Activated CD4-positive, alpha-beta memory T cell treated with anti-CD3 and anti-CD28 coated beads for 36 hours (primary cell): ENCODE measurements at regions of chr11 and their contacts with region 1.

Region 1: GRCh38 chr11:3091791-3092602 is 34.8 kb upstream of the CARS1 start:
- DNase-seq: peak; percentile 81
- H3K4me3 Mint-ChIP-seq: no peak overlapping the region
- H3K27ac Mint-ChIP-seq: no peak overlapping the region
- H3K4me1 Mint-ChIP-seq: no peaks in the 10 kb centered on the region
- H3K27me3 Mint-ChIP-seq: peaks cover 1% of the 10 kb centered on the region

Region 2: GRCh38 chr11:2428322-2428795 is 663.6 kb before region 1 on chr11:
- CTCF ChIA-PET with region 1: no interaction called
- POLR2A ChIA-PET with region 1: no interaction called
- intact Hi-C with region 1: loop called (anchors 5 kb)
- DNase-seq: peak; percentile 87
- H3K4me3 Mint-ChIP-seq: no peak overlapping the region
- H3K27ac Mint-ChIP-seq: no peak overlapping the region
- H3K4me1 Mint-ChIP-seq: no peaks in the 10 kb centered on the region
- H3K27me3 Mint-ChIP-seq: no peaks in the 10 kb centered on the region

Region 3: GRCh38 chr11:2885676-2886081 is 206.3 kb before region 1 on chr11 and contains the start of gene CDKN1C:
- CTCF ChIA-PET with region 1: interaction called, 24 read pairs
- POLR2A ChIA-PET with region 1: no interaction called
- intact Hi-C with region 1: no loop called
- DNase-seq: peak; percentile 82
- H3K4me3 Mint-ChIP-seq: peak within 1 kb of the TSS; percentile 80
- H3K27ac Mint-ChIP-seq: peak within 1 kb of the TSS; percentile 24
- H3K4me1 Mint-ChIP-seq: peaks cover 3% of the 10 kb centered on the region
- H3K27me3 Mint-ChIP-seq: peaks cover 2% of the 10 kb centered on the region
- total RNA-seq, gene CDKN1C: 0.41 to 0.69 TPM

Region 4: DNA sequence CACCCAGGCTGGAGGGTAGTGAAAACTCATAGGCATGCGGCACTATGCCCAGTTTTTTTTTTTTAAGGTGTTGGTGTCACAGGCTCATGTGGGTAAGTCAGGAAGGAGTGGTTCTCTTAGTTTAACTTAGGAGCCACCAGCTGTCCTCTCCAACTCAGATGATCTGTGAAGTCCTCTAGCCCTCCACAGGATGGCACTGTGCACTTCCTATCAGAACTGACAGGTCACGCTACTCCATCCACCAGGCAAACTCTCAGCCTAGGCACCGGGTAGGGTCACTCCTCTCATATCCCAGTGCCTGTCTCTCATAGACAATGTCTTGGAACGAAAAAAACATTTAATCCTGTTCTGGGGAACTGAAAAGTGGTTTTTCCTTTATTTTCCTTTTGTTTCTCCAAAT is 116.4 kb before region 1 on chr11:
- CTCF ChIA-PET with region 1: interaction called, 28 read pairs
- POLR2A ChIA-PET with region 1: no interaction called
- intact Hi-C with region 1: loop called (anchors 5 kb)
- DNase-seq: peak; percentile 53
- H3K4me3 Mint-ChIP-seq: no peak overlapping the region
- H3K27ac Mint-ChIP-seq: no peak overlapping the region
- H3K4me1 Mint-ChIP-seq: peaks cover 28% of the 10 kb centered on the region
- H3K27me3 Mint-ChIP-seq: no peaks in the 10 kb centered on the region

Region 5: GRCh38 chr11:3014057-3014938 is 77.7 kb before region 1 on chr11:
- CTCF ChIA-PET with region 1: interaction called, 27 read pairs
- POLR2A ChIA-PET with region 1: no interaction called
- intact Hi-C with region 1: no loop called
- DNase-seq: peak; percentile 82
- H3K4me3 Mint-ChIP-seq: no peak overlapping the region
- H3K27ac Mint-ChIP-seq: peak overlapping the region; percentile 77
- H3K4me1 Mint-ChIP-seq: peaks cover 55% of the 10 kb centered on the region
- H3K27me3 Mint-ChIP-seq: no peaks in the 10 kb centered on the region

Region 6: GRCh38 chr11:3028813-3029212 is 63.2 kb before region 1 on chr11:
- CTCF ChIA-PET with region 1: no interaction called
- POLR2A ChIA-PET with region 1: no interaction called
- intact Hi-C with region 1: no loop called
- DNase-seq: no peak
- H3K4me3 Mint-ChIP-seq: no peak overlapping the region
- H3K27ac Mint-ChIP-seq: no peak overlapping the region
- H3K4me1 Mint-ChIP-seq: peaks cover 13% of the 10 kb centered on the region
- H3K27me3 Mint-ChIP-seq: no peaks in the 10 kb centered on the region

Region 7: GRCh38 chr11:3049430-3050243 is 42.4 kb before region 1 on chr11:
- CTCF ChIA-PET with region 1: interaction called, 64 read pairs
- POLR2A ChIA-PET with region 1: interaction called, 4 read pairs
- intact Hi-C with region 1: no loop called
- DNase-seq: peak; percentile 91
- H3K4me3 Mint-ChIP-seq: peak overlapping the region; percentile 40
- H3K27ac Mint-ChIP-seq: peak overlapping the region; percentile 93
- H3K4me1 Mint-ChIP-seq: peaks cover 48% of the 10 kb centered on the region
- H3K27me3 Mint-ChIP-seq: no peaks in the 10 kb centered on the region

Region 8: GRCh38 chr11:3077189-3077836 is 14.7 kb before region 1 on chr11:
- CTCF ChIA-PET with region 1: interaction called, 13 read pairs
- POLR2A ChIA-PET with region 1: no interaction called
- intact Hi-C with region 1: no loop called
- DNase-seq: no peak
- H3K4me3 Mint-ChIP-seq: no peak overlapping the region
- H3K27ac Mint-ChIP-seq: no peak overlapping the region
- H3K4me1 Mint-ChIP-seq: no peaks in the 10 kb centered on the region
- H3K27me3 Mint-ChIP-seq: no peaks in the 10 kb centered on the region